Activated CD4-positive, alpha-beta memory T cell treated with anti-CD3 and anti-CD28 coated beads, Interleukin-2, amount 10 ng/mL, durations not matched to agents 7 days and 5 days (primary cell): ENCODE measurements at regions of chr16 and their contacts with region 1.

Region 1: DNA sequence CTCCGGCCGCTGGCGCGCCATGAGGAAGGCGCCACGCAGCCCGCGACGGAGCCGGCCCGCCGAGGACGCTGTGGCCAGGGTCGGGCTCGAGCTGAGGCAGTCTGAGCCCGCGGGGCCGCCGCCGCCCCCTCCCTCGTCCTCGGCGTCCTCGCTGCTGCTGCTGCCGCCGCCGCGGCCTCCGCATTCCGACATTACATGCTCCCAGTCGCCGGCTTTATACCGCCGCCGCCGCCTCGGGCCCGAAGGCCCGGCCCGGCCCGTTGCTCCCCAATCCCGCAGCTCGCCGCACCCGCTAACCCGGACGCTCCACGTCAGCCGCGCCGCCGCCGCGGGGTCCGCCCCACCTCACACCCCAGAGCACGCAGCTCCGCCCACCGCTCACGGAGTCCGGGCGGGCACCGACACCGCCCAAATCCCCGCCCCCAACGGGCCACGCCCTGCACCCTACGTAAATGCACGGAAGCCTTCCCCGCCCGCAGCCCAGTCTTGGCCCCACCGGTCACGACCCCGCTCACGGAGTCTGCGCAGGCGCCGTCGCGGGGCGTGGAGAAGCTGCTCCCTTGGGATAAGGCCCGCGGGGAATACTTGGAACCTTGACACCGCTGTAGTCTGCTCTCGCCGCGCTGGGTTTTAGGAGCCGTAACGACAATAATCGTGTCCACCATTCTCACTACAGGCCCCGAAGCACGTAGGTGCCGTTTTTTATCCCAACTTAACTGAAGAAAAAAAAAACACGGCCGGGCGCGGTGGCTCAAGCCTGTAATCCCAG is at the start of gene TXNDC11:
- DNase-seq: peak; percentile 99
- H3K4me3 Mint-ChIP-seq: peak within 1 kb of the TSS; percentile 86
- H3K27ac Mint-ChIP-seq: peak within 1 kb of the TSS; percentile 92
- H3K4me1 Mint-ChIP-seq: peaks cover 53% of the 10 kb centered on the region
- H3K27me3 Mint-ChIP-seq: no peaks in the 10 kb centered on the region
- total RNA-seq, gene TXNDC11: 45.3 to 46.6 TPM

Region 2: GRCh38 chr16:11423315-11424117 is 319.2 kb before region 1 on chr16:
- CTCF ChIA-PET with region 1: no interaction called
- POLR2A ChIA-PET with region 1: no interaction called
- DNase-seq: no peak
- H3K4me3 Mint-ChIP-seq: no peak overlapping the region
- H3K27ac Mint-ChIP-seq: no peak overlapping the region
- H3K4me1 Mint-ChIP-seq: peaks cover 3% of the 10 kb centered on the region
- H3K27me3 Mint-ChIP-seq: no peaks in the 10 kb centered on the region

Region 3: DNA sequence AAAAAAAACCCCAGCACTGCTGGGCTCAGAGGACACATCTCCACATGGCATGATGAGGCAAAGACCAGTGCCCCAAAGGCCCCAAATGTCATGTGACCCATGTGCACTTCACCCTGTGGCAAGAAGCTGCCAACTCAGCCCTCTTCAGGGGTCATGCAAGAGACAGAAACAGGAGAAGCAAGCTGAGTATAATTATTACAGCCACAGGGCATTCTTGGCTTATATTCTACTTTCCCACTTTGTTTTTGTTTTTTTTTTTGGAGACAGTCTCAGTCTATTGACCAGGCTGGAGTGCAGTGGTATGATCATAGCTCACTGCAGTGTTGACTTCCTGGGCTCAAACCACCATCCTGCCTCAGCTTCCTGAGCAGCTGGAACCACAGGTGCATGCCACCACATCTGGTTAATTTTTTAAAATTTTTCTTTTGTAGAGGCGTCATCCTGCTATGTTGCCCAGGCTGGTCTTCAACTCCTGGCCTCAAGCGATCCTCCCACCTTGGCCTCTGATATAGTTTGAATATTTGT is 123.3 kb before region 1 on chr16:
- CTCF ChIA-PET with region 1: no interaction called
- POLR2A ChIA-PET with region 1: interaction called, 10 read pairs
- DNase-seq: peak; percentile 78
- H3K4me3 Mint-ChIP-seq: peak overlapping the region; percentile 37
- H3K27ac Mint-ChIP-seq: peak overlapping the region; percentile 97
- H3K4me1 Mint-ChIP-seq: peaks cover 65% of the 10 kb centered on the region
- H3K27me3 Mint-ChIP-seq: peaks cover 3% of the 10 kb centered on the region

Region 4: DNA sequence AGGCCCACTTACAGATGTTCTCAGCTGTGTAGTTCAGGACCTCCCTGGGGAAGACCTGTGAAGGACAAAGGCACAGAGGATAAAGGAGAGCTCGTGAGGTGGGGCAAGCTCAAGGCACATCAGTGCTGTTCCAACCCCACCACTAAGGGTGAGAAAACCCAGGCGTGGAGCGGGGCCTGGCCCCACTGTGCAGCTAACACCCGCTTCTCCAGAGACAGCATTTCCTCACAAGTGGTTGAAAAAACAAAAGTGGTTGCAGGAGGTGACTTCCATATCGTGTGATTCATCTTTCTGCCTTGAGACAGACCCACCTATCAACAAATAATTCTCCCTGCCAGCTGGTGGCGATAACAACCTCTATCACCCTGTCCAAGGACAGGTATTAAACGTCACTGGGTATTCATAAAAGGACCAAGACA is 44.4 kb before region 1 on chr16:
- CTCF ChIA-PET with region 1: interaction called, 8 read pairs
- POLR2A ChIA-PET with region 1: interaction called, 16 read pairs
- DNase-seq: peak; percentile 30
- H3K4me3 Mint-ChIP-seq: no peak overlapping the region
- H3K27ac Mint-ChIP-seq: peak overlapping the region; percentile 24
- H3K4me1 Mint-ChIP-seq: peaks cover 56% of the 10 kb centered on the region
- H3K27me3 Mint-ChIP-seq: no peaks in the 10 kb centered on the region

Region 5: DNA sequence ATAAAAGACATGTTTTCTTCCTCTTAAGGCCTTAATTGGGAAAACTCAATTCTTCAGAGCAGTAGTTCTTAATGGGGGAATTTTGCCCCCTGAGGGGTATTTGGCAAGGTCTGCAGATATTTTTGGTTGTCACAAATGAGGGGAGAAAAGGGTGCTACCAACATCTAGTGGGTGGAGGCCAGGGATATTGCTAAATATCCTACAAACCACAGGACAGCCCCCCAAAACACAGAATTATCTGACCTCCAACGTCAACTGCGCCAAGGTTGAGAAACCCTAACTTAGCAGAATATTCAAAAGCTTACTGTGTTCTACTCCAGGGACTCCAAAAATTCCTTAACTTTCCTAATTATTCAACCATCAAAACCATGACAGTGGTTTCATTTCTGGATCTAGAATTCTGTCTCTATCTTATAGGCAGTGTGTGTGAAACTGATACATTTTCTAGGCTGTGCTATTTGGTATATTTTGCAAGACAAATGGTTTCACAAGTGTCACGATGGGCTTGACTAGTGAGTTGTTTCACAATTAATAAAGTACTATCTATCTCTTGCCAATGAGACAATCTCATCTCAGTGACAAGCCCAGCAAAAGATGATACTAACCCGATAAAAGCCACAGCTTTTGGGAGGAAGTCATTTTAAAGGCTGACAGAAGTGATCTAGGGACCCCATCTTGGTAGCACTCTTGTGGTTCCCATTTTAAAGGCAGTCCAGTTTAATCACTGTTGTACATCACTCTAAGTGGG is 14.8 kb before region 1 on chr16:
- CTCF ChIA-PET with region 1: no interaction called
- POLR2A ChIA-PET with region 1: interaction called, 41 read pairs
- DNase-seq: no peak
- H3K4me3 Mint-ChIP-seq: no peak overlapping the region
- H3K27ac Mint-ChIP-seq: peak overlapping the region; percentile 60
- H3K4me1 Mint-ChIP-seq: peaks cover 48% of the 10 kb centered on the region
- H3K27me3 Mint-ChIP-seq: no peaks in the 10 kb centered on the region

Region 6: DNA sequence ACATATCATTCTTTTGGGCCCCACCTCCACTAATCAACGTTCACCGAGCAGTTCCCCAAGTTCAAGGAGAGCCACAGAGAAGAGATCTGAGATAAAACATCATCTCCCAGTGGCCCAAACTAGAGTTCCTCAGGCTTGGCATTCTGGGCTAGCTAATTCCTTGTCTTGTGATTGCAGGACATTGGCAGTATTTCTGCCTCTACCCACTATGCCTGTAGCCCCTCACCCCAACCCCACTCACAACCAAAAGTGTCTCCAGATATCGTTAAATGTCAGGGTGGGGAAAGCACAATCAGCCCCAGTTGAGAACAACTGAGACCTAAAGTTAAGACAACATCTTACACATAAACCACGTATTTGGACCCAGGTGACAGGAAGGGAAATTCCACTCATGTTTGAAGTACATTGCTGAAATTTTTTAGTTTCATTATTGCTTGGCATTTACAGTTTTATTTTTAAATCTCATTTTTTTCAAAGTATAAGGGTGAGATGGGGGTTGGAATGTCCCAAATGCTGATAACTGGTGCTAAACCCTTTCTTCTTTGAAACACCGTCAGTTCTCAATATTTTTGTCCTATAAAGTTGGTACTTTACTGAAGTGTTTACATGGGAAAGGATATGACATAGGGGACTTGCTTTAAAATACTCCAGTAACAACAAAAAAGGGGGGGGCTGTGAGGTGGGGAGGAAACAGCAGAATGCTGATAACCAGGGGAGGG is 40.8 kb after region 1 on chr16:
- CTCF ChIA-PET with region 1: interaction called, 4 read pairs
- POLR2A ChIA-PET with region 1: interaction called, 49 read pairs
- DNase-seq: peak; percentile 42
- H3K4me3 Mint-ChIP-seq: peak overlapping the region; percentile 72
- H3K27ac Mint-ChIP-seq: peak overlapping the region; percentile 98
- H3K4me1 Mint-ChIP-seq: peaks cover 66% of the 10 kb centered on the region
- H3K27me3 Mint-ChIP-seq: no peaks in the 10 kb centered on the region

Region 7: GRCh38 chr16:12010388-12011251 is 267.9 kb after region 1 on chr16:
- CTCF ChIA-PET with region 1: no interaction called
- POLR2A ChIA-PET with region 1: no interaction called
- DNase-seq: no peak
- H3K4me3 Mint-ChIP-seq: no peak overlapping the region
- H3K27ac Mint-ChIP-seq: no peak overlapping the region
- H3K4me1 Mint-ChIP-seq: no peaks in the 10 kb centered on the region
- H3K27me3 Mint-ChIP-seq: no peaks in the 10 kb centered on the region